H1 (cell line): ENCODE measurements at regions of chr5 and their contacts with region 1.

Region 1: DNA sequence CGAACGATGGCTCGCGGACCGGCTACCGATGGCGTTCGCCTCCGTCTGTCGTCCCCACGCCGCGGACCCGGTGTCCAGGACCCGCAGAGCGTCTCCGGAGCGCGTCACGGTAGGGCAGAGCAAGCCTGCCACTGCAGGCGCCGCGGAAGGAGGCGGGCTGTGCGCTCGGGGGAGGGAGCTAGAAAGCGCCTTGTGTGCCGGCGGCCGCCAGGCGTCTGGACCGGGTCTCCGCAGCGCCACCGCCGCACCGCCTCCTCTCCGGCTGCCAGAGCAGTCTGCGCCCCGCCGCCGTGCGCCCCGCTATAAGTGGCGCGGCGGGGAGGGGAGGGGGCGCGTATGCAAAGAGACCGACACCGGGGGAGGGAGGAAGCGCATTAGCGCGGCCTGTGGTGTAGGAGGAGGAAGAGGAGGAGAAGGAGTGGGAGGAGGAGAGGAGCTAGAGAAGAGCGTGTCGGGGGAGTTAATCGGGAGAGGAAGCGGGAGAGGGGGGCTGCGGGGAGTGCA is at the start of gene ENC1:
- DNase-seq: peak; percentile 87 to 90
- H3K4me3 ChIP-seq: peak within 1 kb of the TSS; percentile 54 to 90 (median 86)
- H3K27ac ChIP-seq: no peak within 1 kb of the TSS
- H3K4me1 ChIP-seq: peaks cover 0 to 8% (median 2%) of the 10 kb centered on the region in 4 experiments; a peak in 5 of 7 replicates
- H3K27me3 ChIP-seq: peaks cover 0 to 24% (median 10%) of the 10 kb centered on the region in 4 experiments; a peak in 6 of 7 replicates
- CTCF ChIP-seq: peak; percentile 29 to 65 (median 47)
- EP300 ChIP-seq: peak in 1 of 2 experiments; percentile 78; a peak in 2 of 3 replicates
- POLR2A ChIP-seq: peak; percentile 92 to 96
- RAD21 ChIP-seq: peak; percentile 37 to 50
- total RNA-seq, gene ENC1: 9.5 and 13.2 TPM in 2 replicates

Region 2: GRCh38 chr5:73902327-73903051 is 738.0 kb before region 1 on chr5:
- CTCF ChIA-PET with region 1: interaction called, 17 read pairs
- POLR2A ChIA-PET with region 1: no interaction called
- DNase-seq: peak in 1 of 2 experiments; percentile 21
- H3K4me3 ChIP-seq: no peak overlapping the region
- H3K27ac ChIP-seq: no peak overlapping the region
- H3K4me1 ChIP-seq: no peaks in the 10 kb centered on the region
- H3K27me3 ChIP-seq: no peaks in the 10 kb centered on the region
- CTCF ChIP-seq: peak in 2 of 3 experiments; percentile 58 to 68; a peak in 3 of 4 replicates
- EP300 ChIP-seq: no peak
- POLR2A ChIP-seq: no peak
- RAD21 ChIP-seq: peak; percentile 85 to 89

Region 3: GRCh38 chr5:74212336-74212735 is 428.2 kb before region 1 on chr5:
- CTCF ChIA-PET with region 1: interaction called, 10 read pairs
- POLR2A ChIA-PET with region 1: interaction called, 4 read pairs
- DNase-seq: peak in 1 of 2 experiments; percentile 57
- H3K4me3 ChIP-seq: no peak overlapping the region
- H3K27ac ChIP-seq: no peak overlapping the region
- H3K4me1 ChIP-seq: peaks cover 0 to under 1% (median 0%) of the 10 kb centered on the region in 4 experiments; a peak in 1 of 7 replicates
- H3K27me3 ChIP-seq: no peaks in the 10 kb centered on the region
- CTCF ChIP-seq: peak; percentile 69 to 82 (median 74)
- EP300 ChIP-seq: no peak
- POLR2A ChIP-seq: no peak
- RAD21 ChIP-seq: peak; percentile 75 to 85

Region 4: GRCh38 chr5:74275171-74275992 is 365.1 kb before region 1 on chr5:
- CTCF ChIA-PET with region 1: no interaction called
- POLR2A ChIA-PET with region 1: no interaction called
- DNase-seq: no peak
- H3K4me3 ChIP-seq: no peak overlapping the region
- H3K27ac ChIP-seq: no peak overlapping the region
- H3K4me1 ChIP-seq: no peaks in the 10 kb centered on the region
- H3K27me3 ChIP-seq: no peaks in the 10 kb centered on the region
- CTCF ChIP-seq: no peak
- EP300 ChIP-seq: no peak
- POLR2A ChIP-seq: no peak
- RAD21 ChIP-seq: no peak

Region 5: DNA sequence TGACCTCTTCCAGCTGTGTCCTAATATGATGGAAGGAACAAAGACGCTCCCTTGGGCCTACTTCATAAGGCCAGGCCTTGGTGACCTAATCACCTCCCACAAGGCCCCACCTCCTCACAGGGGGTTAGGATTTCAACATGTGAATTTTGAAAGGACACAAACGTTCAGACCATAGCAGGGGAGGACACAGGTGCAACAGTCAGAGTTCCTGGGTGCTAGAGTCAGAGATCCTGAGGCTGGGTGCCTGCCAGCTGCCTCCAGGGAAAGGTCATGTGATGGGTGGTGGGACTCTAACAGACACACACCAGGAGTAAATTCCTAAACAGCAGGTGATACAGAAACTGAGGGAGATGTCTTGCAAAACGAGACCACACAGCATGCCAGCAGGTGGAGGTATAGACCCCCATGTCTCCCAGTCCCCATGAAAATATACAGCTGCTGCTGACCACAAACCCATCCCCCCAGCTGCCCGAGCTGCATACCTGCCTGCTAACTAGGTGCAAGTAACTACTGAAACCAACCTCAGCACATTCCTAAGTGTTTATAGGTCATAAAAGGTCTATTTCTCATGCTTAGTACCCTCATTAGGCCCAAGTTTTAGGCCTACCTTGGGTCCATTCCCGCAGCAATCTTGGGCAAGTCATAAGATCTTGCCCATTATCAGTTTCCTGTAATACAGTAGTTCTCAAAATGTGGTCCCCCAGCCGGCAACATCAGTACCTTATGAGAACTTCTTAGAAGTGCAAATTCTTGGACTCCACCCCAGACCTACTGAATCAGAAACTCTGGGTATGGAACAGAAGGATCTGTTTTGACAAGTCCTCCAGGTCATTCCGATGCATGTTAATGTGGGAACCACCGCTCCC is 245.4 kb before region 1 on chr5:
- CTCF ChIA-PET with region 1: interaction called, 7 read pairs
- POLR2A ChIA-PET with region 1: interaction called, 11 read pairs
- DNase-seq: peak; percentile 66 to 82
- H3K4me3 ChIP-seq: no peak overlapping the region
- H3K27ac ChIP-seq: no peak overlapping the region
- H3K4me1 ChIP-seq: peaks cover 0 to 6% (median 4%) of the 10 kb centered on the region in 4 experiments; a peak in 6 of 7 replicates
- H3K27me3 ChIP-seq: peaks cover 0 to 19% (median 10%) of the 10 kb centered on the region in 4 experiments; a peak in 4 of 7 replicates
- CTCF ChIP-seq: peak; percentile 35 to 51 (median 37)
- EP300 ChIP-seq: peak; percentile 12 to 94; a peak in 2 of 3 replicates
- POLR2A ChIP-seq: no peak
- RAD21 ChIP-seq: peak; percentile 64 to 72

Region 6: GRCh38 chr5:74510476-74511075 is 129.9 kb before region 1 on chr5:
- CTCF ChIA-PET with region 1: no interaction called
- POLR2A ChIA-PET with region 1: no interaction called
- DNase-seq: no peak
- H3K4me3 ChIP-seq: no peak overlapping the region
- H3K27ac ChIP-seq: no peak overlapping the region
- H3K4me1 ChIP-seq: peaks cover 0 to under 1% (median 0%) of the 10 kb centered on the region in 4 experiments; a peak in 1 of 7 replicates
- H3K27me3 ChIP-seq: no peaks in the 10 kb centered on the region
- CTCF ChIP-seq: no peak
- EP300 ChIP-seq: no peak
- POLR2A ChIP-seq: no peak
- RAD21 ChIP-seq: no peak

Region 7: GRCh38 chr5:74616236-74617146 is 24.0 kb before region 1 on chr5:
- CTCF ChIA-PET with region 1: interaction called, 4 read pairs
- POLR2A ChIA-PET with region 1: interaction called, 12 read pairs
- DNase-seq: no peak
- H3K4me3 ChIP-seq: no peak overlapping the region
- H3K27ac ChIP-seq: no peak overlapping the region
- H3K4me1 ChIP-seq: peaks cover 0 to 4% (median 0%) of the 10 kb centered on the region in 4 experiments; a peak in 1 of 7 replicates
- H3K27me3 ChIP-seq: no peaks in the 10 kb centered on the region; a peak in 1 of 7 replicates
- CTCF ChIP-seq: no peak
- EP300 ChIP-seq: no peak
- POLR2A ChIP-seq: no peak
- RAD21 ChIP-seq: no peak

Region 8: DNA sequence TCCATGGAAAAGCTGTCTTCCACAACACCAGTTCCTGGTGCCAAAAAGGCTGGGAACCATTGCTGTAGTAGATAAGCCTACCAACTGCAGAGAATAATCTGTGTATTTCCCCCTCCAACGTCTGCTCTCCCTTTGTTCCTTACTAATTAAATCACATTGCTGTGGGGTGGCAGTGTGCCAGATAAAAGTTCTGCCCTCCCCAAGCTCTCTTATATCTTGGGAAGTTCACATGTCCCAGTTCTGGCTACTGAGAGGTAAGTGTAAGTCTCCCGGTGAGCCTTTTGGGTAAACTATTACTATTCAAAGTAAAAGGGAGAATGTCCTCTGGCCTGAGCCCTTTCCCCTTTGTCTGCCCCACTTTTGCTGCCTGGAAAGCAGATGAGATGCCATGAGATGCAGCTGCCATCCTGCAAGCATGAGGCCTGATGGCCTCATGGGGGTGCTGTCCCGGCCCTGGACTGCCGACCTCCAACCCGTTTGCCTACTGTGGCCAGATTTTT is 14.7 kb before region 1 on chr5:
- CTCF ChIA-PET with region 1: interaction called, 17 read pairs
- POLR2A ChIA-PET with region 1: interaction called, 24 read pairs
- DNase-seq: no peak
- H3K4me3 ChIP-seq: no peak overlapping the region
- H3K27ac ChIP-seq: no peak overlapping the region
- H3K4me1 ChIP-seq: peaks cover 2 to 17% (median 15%) of the 10 kb centered on the region in 4 experiments
- H3K27me3 ChIP-seq: no peaks in the 10 kb centered on the region
- CTCF ChIP-seq: peak; percentile 32 to 76 (median 67); a peak in 3 of 4 replicates
- EP300 ChIP-seq: no peak
- POLR2A ChIP-seq: no peak
- RAD21 ChIP-seq: peak; percentile 17 to 45; a peak in 3 of 4 replicates

Region 9: GRCh38 chr5:74786867-74787266 is 146.4 kb after region 1 on chr5:
- CTCF ChIA-PET with region 1: no interaction called
- POLR2A ChIA-PET with region 1: no interaction called
- DNase-seq: no peak
- H3K4me3 ChIP-seq: no peak overlapping the region
- H3K27ac ChIP-seq: no peak overlapping the region
- H3K4me1 ChIP-seq: no peaks in the 10 kb centered on the region
- H3K27me3 ChIP-seq: no peaks in the 10 kb centered on the region
- CTCF ChIP-seq: 0 out of 4 replicates have a peak, but pooled peaks of 1 of the 3 experiments have one; percentile 9
- EP300 ChIP-seq: no peak
- POLR2A ChIP-seq: no peak
- RAD21 ChIP-seq: peak in 1 of 2 experiments; percentile 22; a peak in 1 of 4 replicates